Activated T-helper 1 cell treated with anti-CD3 and anti-CD28 coated beads, Interleukin-12 subunit alpha, Interleukin-12 subunit beta, Interleukin-2, Interleukin-4 antibody, amounts not matched to agents 30 ng/mL and 10 ng/mL and 1 ng/mL, durations not matched to agents 14 hours and 24 hours and 36 hours (primary cell): ENCODE measurements at regions of chr19 and their contacts with region 1.

Region 1: GRCh38 chr19:47447470-47448359 is 24.0 kb downstream of the SLC8A2 start:
- DNase-seq: peak; percentile 69
- H3K4me3 Mint-ChIP-seq: peak overlapping the region; percentile 58
- H3K27ac Mint-ChIP-seq: peak overlapping the region; percentile 56
- H3K4me1 Mint-ChIP-seq: peaks cover 44% of the 10 kb centered on the region
- H3K27me3 Mint-ChIP-seq: peaks cover 59% of the 10 kb centered on the region

Region 2: GRCh38 chr19:47428177-47428894 is 19.4 kb before region 1 on chr19:
- intact Hi-C with region 1: loop called (anchors 1 kb)
- DNase-seq: peak; percentile 78
- H3K4me3 Mint-ChIP-seq: no peak overlapping the region
- H3K27ac Mint-ChIP-seq: no peak overlapping the region
- H3K4me1 Mint-ChIP-seq: peaks cover 22% of the 10 kb centered on the region
- H3K27me3 Mint-ChIP-seq: peaks cover 30% of the 10 kb centered on the region

Region 3: GRCh38 chr19:47483800-47484690 is 36.3 kb after region 1 on chr19 and contains the start of gene KPTN:
- intact Hi-C with region 1: loop called (anchors 2 kb)
- DNase-seq: peak; percentile 86
- H3K4me3 Mint-ChIP-seq: peak within 1 kb of the TSS; percentile 99
- H3K27ac Mint-ChIP-seq: peak within 1 kb of the TSS; percentile 99
- H3K4me1 Mint-ChIP-seq: peaks cover 23% of the 10 kb centered on the region
- H3K27me3 Mint-ChIP-seq: peaks cover 4% of the 10 kb centered on the region
- total RNA-seq, gene KPTN: 9.6 and 10.8 TPM in 2 replicates

Region 4: DNA sequence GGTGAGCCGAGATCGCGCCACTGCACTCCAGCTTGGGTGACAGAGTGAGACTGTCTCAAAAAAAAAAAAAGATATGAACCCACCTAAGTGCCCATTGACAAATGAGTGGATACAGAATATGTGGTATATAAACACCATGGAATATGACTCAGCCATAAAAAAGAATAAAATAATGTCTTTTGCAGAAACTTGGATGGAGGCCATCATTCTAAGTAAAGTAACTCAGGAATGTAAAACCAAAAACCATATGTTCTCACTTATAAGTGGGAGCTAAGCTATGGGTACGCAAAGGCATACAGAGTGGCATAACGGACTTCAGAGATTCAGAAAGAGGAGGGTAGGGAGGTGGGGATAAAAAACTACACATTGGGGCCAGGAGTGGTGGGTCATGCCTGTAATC is 633.4 kb after region 1 on chr19:
- intact Hi-C with region 1: no loop called
- DNase-seq: no peak
- H3K4me3 Mint-ChIP-seq: no peak overlapping the region
- H3K27ac Mint-ChIP-seq: no peak overlapping the region
- H3K4me1 Mint-ChIP-seq: no peaks in the 10 kb centered on the region
- H3K27me3 Mint-ChIP-seq: no peaks in the 10 kb centered on the region